ENCODE measurements at regions of chr2 and their contacts with region 1.

Region 1: GRCh38 chr2:31523871-31524492 is 56.8 kb downstream of the SRD5A2 start:
- H3K4me3 ChIP-seq: no peak overlapping the region
- H3K27ac ChIP-seq: no peak overlapping the region
- H3K4me1 ChIP-seq: no peaks in the 10 kb centered on the region; the same call in 1 of the 2 replicates
- CTCF ChIP-seq: 0 out of 2 replicates have a peak, but pooled peaks have one; percentile 36

Region 2: DNA sequence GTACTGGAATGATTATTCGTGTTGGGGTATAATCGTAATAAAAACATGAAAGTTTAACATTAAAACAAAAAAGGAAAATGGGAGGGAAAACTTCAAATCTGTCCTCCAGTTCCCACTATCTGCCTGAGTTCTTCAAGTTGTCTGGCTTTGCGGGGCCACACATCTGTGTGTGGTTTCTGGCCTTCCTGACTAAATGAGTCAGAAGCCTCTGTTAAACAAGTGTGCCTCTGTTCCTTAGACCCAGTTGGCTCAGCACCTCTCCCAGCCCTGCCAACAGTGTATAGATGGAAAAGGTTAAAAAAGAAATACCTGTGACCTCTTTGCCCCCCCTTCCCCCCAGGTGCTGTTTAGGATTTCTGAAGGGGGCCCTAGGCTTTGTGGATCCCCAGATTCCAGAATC is 139.6 kb before region 1 on chr2:
- CTCF ChIA-PET with region 1: interaction called, 15 read pairs
- POLR2A ChIA-PET with region 1: no interaction called
- H3K4me3 ChIP-seq: no peak overlapping the region
- H3K27ac ChIP-seq: no peak overlapping the region
- H3K4me1 ChIP-seq: 0 out of 2 replicates have a peak, but pooled peaks cover 2% of the 10 kb centered on the region
- CTCF ChIP-seq: no peak

Region 3: GRCh38 chr2:31511376-31511775 is 12.6 kb before region 1 on chr2:
- CTCF ChIA-PET with region 1: interaction called, 20 read pairs
- POLR2A ChIA-PET with region 1: no interaction called
- H3K4me3 ChIP-seq: no peak overlapping the region
- H3K27ac ChIP-seq: no peak overlapping the region
- H3K4me1 ChIP-seq: no peaks in the 10 kb centered on the region
- CTCF ChIP-seq: no peak

Measured in HEK293 (cell line).